Psoas muscle (tissue), 8 donors: ENCODE measurements at regions of chr11 and their contacts with region 1.

Region 1: DNA sequence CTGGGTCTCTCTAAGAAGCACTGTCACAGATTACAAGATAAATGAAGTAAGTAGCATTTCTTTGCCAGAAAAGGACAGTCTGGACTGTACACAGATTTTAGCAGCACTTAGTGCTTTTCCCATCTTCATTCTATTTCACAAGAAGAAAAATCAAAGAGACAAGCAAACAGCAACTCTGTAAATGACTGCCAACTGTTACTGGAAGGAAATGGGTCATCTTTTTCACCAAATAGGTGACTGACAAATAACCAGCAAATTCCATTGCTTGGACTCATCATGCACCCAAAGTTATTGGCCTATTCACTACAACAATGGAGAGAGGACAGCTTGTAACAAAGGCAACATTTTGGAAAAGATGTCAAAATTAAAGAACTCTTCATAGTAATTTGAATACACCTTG is 28.9 kb upstream of the CARD18 start:
- DNase-seq: no peak
- ATAC-seq: no peak
- H3K4me3 ChIP-seq: no peak overlapping the region
- H3K27ac ChIP-seq: no peak overlapping the region
- H3K4me1 ChIP-seq: no peaks in the 10 kb centered on the region
- H3K27me3 ChIP-seq: no peaks in the 10 kb centered on the region
- CTCF ChIP-seq: no peak

Region 2: GRCh38 chr11:104946907-104947306 is 221.6 kb before region 1 on chr11:
- intact Hi-C with region 1: no loop called
- DNase-seq: no peak
- ATAC-seq: no peak
- H3K4me3 ChIP-seq: no peak overlapping the region
- H3K27ac ChIP-seq: no peak overlapping the region
- H3K4me1 ChIP-seq: no peaks in the 10 kb centered on the region
- H3K27me3 ChIP-seq: no peaks in the 10 kb centered on the region
- CTCF ChIP-seq: peak; percentile 36

Region 3: DNA sequence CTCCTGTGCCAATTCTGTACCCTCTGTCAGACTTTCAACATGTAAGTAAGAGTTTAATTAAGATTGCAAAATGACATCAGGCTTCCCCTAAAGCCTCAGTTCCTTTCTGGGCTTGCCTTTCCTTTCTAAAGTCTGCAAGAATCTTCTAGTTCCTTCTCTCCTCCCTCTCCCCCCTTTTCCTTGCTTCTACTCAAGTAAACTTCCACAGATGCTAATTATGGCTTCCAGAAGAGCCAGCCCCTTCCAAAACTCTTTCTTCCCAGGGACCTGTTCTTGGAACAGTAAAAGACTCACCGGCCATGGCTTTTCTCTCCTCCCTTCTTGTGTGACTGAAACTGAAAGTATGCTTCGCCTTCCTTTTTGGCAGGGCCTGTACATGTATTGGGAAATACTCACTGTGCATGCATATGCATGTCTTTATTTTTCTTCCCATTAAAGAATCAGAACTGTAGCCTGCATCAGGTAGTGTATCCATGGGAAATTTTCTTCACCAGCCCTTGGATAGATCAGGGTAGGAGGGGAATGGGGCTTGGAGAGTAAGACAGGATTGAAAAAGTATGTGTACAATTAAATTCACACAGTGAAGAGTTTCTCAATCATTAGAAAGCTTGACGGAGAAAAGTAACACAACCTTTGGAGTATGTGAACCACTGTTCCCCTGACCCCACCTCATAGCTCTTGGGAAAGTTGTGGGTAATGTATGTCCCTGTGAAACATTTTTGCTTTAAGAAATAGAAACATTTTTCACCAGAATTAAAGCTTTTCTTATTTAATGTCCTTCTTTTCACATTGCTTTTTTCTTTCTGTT is 133.4 kb before region 1 on chr11 and contains the start of gene CASP1:
- intact Hi-C with region 1: loop called in 1 of 2 experiments (anchors 10 kb)
- DNase-seq: no peak
- ATAC-seq: peak; percentile 46 to 84 (median 68)
- H3K4me3 ChIP-seq: peak within 1 kb of the TSS; percentile 58
- H3K27ac ChIP-seq: no peak within 1 kb of the TSS
- H3K4me1 ChIP-seq: no peaks in the 10 kb centered on the region
- H3K27me3 ChIP-seq: no peaks in the 10 kb centered on the region
- CTCF ChIP-seq: no peak
- total RNA-seq, gene CASP1: 1.6 to 10.2 (median 4.3) TPM